Calu3 (cell line): ENCODE measurements at regions of chr5 and their contacts with region 1.

Region 1: DNA sequence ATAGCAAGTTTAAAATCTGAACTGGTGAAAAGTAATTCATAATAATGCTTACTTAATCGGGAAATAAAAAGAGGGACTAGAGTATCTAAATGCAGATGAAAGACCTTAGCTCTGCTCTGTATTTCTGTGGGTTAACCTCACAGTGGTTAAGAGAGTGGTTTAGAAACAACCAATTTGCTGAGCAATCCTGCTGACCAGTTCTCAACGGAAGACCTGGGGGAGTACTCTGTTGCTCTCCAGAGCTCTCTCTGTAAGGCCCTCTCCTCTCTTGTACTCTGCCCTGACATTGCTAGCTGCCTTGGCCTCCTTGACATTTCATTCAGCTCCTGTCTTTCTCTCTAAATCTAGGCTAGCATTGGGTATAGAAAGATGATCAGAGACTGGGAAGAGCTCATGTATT is 1186.6 kb upstream of the SEMA6A start:
- DNase-seq: no peak
- H3K4me3 Mint-ChIP-seq: no peak overlapping the region
- H3K27ac Mint-ChIP-seq: no peak overlapping the region
- H3K4me1 Mint-ChIP-seq: no peaks in the 10 kb centered on the region
- H3K27me3 Mint-ChIP-seq: no peaks in the 10 kb centered on the region
- CTCF ChIP-seq: no peak

Region 2: DNA sequence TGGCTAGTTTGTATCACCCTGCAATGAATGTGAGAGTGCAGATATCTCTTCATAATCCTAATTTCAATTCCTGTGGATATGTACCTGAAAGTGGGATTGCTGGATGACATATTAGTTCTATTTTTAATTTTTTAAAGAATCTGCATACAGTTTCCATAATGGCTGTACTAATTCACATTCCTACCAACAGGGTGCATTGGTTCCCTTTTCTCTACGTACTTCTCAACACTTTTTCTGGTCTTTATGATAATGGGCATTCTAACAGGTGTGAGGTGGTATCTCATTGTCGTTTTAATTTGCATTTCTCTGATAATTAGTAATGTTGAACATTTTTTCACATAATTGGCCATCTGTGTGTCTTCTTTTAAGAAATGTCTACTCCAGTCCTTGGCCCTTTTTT is 299.6 kb after region 1 on chr5:
- CTCF ChIA-PET with region 1: no interaction called
- intact Hi-C with region 1: no loop called
- DNase-seq: no peak
- H3K4me3 Mint-ChIP-seq: no peak overlapping the region
- H3K27ac Mint-ChIP-seq: no peak overlapping the region
- H3K4me1 Mint-ChIP-seq: no peaks in the 10 kb centered on the region
- H3K27me3 Mint-ChIP-seq: no peaks in the 10 kb centered on the region
- CTCF ChIP-seq: no peak

Region 3: GRCh38 chr5:118593003-118593328 is 831.8 kb after region 1 on chr5:
- CTCF ChIA-PET with region 1: interaction called, 10 read pairs
- intact Hi-C with region 1: no loop called
- DNase-seq: no peak
- H3K4me3 Mint-ChIP-seq: no peak overlapping the region
- H3K27ac Mint-ChIP-seq: no peak overlapping the region
- H3K4me1 Mint-ChIP-seq: no peaks in the 10 kb centered on the region
- H3K27me3 Mint-ChIP-seq: no peaks in the 10 kb centered on the region
- CTCF ChIP-seq: no peak